Psoas muscle (tissue), 8 donors: ENCODE measurements at regions of chr15 and their contacts with region 1.

Region 1: DNA sequence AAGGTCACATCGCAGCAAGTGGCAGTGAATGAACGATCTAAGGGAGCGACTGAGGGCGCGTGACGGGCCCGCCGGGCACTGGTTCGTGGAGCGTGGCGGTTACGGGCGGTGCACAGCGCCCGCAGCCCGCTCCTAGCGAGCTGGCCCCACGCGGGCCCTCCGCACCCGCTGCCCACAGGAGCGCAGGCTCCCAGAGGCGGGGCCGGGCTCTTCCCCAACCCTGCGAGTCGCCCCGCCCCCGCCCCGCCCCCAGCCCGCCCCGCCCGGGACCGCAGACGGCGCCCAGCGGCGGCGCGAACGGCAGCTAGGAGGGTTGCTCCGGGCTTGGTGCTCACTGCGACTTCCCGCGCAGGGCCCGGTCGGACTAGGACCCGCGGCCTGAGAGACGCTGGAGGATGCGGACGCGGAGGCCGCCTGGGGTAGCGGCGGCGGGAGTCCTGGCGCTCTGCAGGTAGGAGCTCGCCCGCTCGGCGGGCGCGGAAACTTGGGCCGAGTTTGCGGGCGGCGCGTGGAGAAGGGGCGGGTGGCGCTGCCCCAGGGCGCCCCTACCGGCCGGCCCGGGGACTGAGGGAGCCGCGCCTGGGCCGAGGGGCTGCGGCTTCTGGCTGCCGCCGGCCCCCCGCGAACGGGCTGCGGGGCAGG is at the start of gene C15orf39:
- DNase-seq: peak; percentile 71 to 85
- ATAC-seq: peak; percentile 79 to 83 (median 82)
- H3K4me3 ChIP-seq: peak within 1 kb of the TSS; percentile 87
- H3K27ac ChIP-seq: peak within 1 kb of the TSS; percentile 86
- H3K4me1 ChIP-seq: peaks cover 20% of the 10 kb centered on the region
- H3K27me3 ChIP-seq: no peaks in the 10 kb centered on the region
- CTCF ChIP-seq: peak; percentile 86
- total RNA-seq, gene C15orf39: 4.0 to 4.6 (median 4.2) TPM

Region 2: DNA sequence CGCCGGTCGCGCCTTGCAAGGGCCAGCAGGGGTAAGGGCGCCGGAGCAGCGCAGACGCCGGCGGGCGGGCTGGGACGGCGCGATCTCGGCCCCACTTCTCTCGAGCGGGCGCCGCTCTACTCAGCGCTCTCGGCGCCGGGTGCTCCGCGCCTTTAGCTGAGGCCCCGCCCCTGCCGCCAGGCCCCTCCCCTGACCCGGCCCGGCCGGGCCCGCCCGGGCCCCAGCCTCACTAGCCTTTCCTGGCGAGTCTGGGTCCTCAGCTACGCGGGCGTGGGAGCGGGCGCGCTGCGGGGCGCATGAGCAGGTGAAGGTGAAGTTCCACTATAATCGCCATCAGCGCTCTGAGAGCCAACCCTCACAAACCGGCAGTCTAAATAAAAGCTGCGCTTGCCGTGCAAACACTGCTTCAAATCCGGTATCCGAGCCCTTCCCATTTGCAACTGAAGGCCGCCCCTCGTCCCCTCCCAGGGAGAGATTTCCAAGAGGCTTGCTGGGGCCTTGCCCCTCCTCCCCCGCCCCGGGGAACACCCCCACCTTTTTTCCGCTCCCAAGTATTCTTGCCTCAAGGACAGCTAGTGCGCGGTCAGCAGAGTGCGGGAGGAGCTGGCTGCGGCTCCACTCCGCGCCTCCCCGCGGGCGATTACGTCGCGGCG is 245.0 kb before region 1 on chr15 and contains the start of gene RPP25:
- intact Hi-C with region 1: loop called in 1 of 2 experiments (anchors 2 kb)
- DNase-seq: peak; percentile 78 to 84
- ATAC-seq: peak; percentile 83 to 90 (median 89)
- H3K4me3 ChIP-seq: peak within 1 kb of the TSS; percentile 72
- H3K27ac ChIP-seq: peak within 1 kb of the TSS; percentile 60
- H3K4me1 ChIP-seq: peaks cover 29% of the 10 kb centered on the region
- H3K27me3 ChIP-seq: peaks cover 0 to 50% (median 15%) of the 10 kb centered on the region in 3 donors
- CTCF ChIP-seq: no peak
- total RNA-seq, gene RPP25: 0.64 to 1.9 (median 1.4) TPM

Region 3: DNA sequence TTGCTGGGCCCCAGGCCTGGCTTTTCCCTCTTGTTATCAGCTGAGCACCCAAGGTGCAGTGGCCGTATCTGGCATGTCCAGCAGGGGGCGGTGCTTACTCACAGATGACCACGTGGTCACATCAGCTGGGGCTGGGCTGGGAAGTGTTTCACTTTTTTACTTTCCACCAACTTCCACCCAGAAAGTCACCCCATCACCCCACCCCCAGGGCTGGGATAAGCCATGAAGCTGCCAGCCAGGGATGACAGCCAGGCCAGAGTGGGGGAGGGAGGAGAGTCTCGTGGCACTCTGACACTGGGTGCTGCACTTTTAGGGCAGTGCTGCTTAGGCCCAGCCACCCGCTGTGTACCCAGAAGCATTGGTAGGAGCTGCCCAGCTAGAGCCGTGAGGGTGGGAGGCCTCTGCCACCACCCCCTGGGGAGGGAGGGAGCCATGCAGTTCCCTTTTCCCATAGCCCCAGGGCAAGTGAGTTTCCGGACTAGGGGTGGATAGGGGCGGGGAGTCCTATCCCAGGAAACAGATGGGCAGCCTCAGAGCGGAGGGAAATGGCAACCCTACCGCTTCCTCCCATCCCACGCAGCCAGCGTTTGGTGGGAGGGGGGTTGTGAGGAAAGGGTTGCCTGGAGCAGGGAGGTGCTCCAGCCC is 172.2 kb before region 1 on chr15:
- intact Hi-C with region 1: loop called (anchors 1 to 2 kb)
- DNase-seq: peak; percentile 92 to 95
- ATAC-seq: peak; percentile 88 to 96 (median 92)
- H3K4me3 ChIP-seq: peak overlapping the region; percentile 48
- H3K27ac ChIP-seq: peak overlapping the region; percentile 25
- H3K4me1 ChIP-seq: peaks cover 20% of the 10 kb centered on the region
- H3K27me3 ChIP-seq: no peaks in the 10 kb centered on the region
- CTCF ChIP-seq: peak; percentile 93

Region 4: DNA sequence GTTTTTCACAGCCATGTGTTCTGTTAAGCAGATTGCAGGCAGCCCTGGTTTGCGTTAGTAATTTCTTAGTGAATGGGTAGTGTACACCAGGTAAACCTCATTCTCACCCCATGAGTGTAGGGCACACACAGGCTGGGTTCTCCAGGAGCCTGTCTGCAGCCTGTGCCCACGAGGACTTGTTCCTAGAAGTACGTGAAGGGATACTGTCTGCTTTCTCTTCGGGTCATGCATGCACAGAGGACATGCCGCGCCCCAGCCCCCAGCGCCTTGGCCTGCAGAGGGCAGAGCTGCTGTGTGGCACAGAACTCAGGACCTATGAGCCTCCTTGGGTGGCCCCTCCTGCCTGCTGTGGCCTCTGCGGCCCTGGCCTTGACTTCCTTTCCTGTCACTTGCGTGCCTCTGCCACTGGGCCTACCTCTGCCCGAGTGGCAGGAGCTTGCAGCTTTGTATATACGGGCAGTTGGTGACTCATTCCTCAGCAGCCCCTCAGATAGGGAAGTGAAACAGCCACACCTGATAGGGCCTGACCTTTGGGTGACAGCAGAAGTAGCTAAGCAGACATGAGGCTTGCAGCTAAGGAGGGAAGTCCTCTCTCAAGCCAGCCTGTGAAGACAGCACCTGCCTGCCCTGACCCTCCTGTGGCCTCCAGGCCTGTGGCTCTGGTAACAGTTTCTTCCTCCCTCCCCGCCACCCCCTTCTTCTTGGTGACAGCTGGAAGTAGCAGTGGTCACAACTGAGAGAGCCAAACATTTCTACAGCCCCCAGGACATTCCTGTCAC is 158.8 kb before region 1 on chr15:
- intact Hi-C with region 1: loop called in 1 of 2 experiments (anchors 1 kb)
- DNase-seq: peak; percentile 78 to 80
- ATAC-seq: peak; percentile 40 to 54 (median 48)
- H3K4me3 ChIP-seq: no peak overlapping the region
- H3K27ac ChIP-seq: peak overlapping the region; percentile 73
- H3K4me1 ChIP-seq: peaks cover 47% of the 10 kb centered on the region
- H3K27me3 ChIP-seq: no peaks in the 10 kb centered on the region
- CTCF ChIP-seq: peak; percentile 36